Left ventricle myocardium superior (tissue), 1 donor: ENCODE measurements at regions of chr3 and their contacts with region 1.

Region 1: GRCh38 chr3:118938183-118938961 is 96.3 kb downstream of the IGSF11 start:
- DNase-seq: no peak
- ATAC-seq: no peak

Region 2: GRCh38 chr3:118900737-118901525 is 37.4 kb before region 1 on chr3:
- intact Hi-C with region 1: loop called (anchors 2 kb)
- DNase-seq: no peak
- ATAC-seq: no peak

Region 3: DNA sequence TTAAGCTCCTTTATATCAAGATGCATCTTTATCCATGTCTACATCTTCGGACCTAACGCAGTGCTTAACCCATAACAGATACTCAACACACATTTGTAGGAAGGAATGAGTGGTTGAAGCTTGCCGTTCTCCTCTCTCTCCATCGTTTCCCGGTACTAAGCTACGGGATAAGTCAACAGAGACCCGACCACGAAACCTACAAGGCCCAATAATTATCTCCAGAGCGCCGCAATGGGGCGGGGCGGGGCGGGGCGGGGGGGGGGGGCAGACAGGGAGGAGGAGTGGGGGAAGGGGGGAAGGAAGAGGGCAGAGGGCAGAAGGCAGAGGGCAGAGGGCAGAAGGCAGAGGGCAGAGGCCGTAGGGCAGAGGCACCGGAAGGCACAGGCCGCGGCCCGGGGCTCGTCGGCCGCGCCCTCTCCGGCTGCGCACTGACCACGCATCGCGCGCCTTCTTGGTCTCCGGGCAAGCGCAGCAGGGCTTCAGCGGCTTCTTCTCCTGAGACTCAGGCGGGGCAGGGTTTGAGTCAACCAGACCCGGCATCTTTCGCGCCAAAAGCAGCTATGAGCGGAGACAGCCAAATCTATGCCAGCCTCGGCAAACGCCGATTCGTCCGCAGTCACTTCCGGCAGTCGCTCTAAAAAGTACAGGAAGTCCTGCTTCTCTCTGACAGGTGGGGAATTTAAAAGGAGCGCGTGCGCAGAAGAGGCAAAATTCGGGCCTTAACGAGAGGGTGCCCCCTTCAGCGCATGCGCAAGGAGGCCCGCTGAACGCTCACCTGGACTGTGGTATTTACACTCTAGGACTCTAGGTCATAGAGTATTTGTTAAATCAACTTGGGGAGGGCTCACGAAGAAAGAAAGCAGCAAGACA is 738.6 kb after region 1 on chr3 and contains the start of gene COX17:
- intact Hi-C with region 1: no loop called
- DNase-seq: peak; percentile 94
- ATAC-seq: peak; percentile 89
- total RNA-seq, gene COX17: 177 TPM